K562 (cell line): ENCODE measurements at regions of chr10 and their contacts with region 1.

Region 1: DNA sequence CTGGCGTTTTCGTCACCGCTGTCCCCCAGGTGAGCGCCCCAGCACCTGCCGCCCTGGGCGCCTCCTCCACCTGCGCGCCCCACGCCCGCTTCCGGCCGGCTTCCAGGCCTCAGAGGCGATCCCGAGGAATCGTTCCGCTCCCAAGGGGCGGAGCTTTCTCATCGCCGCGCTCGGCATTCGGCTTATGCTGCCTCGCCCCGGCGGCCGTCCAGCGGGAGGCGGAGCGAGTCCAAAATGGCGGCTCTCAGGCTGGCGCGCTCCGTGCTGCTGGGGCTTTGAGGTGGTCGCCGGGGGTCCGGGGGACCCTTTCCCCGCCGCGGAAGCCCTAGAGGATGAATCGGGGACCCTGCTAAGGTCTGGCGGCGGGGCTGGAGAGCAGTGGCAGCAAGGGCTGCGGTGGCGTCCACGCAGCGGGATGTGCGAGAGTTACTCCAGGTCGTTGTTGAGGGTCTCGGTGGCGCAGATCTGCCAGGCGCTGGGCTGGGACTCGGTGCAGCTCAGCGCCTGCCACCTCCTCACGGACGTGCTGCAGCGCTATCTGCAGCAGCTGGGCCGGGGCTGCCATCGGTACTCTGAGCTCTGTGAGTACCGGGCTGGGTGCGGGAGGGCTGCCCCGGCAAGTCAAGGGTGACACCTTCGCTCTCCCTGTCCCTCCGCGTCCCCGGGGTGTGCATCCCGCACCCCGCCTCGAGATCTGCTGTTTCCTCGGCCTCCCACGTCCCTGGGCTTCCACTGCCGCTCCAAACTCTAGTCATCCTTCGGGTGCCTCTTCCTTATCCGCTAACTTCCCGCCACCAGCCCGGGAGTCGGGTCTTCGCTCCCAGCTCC is at the start of gene TAF3:
- DNase-seq: peak; percentile 90 to 97 (median 90)
- ATAC-seq: peak; percentile 84
- H3K4me3 ChIP-seq: peak within 1 kb of the TSS; percentile 88
- H3K27ac ChIP-seq: peak within 1 kb of the TSS; percentile 77
- H3K4me1 ChIP-seq: peaks cover 7 to 13% of the 10 kb centered on the region in 2 experiments
- H3K27me3 ChIP-seq: no peaks in the 10 kb centered on the region
- CTCF ChIP-seq: no peak
- EP300 ChIP-seq: peak; percentile 34; the same call in 1 of the 2 replicates
- POLR2A ChIP-seq: peak; percentile 93
- RAD21 ChIP-seq: no peak
- polyA plus RNA-seq, gene TAF3: 1.5 to 2.0 TPM

Region 2: GRCh38 chr10:7787857-7788638 is 30.5 kb before region 1 on chr10 and contains the starts of genes ATP5F1C and KIN:
- CTCF ChIA-PET with region 1: no interaction called
- POLR2A ChIA-PET with region 1: interaction called, 12 read pairs
- in situ Hi-C with region 1: no loop called
- intact Hi-C with region 1: loop called (anchors 2 kb)
- DNase-seq: peak; percentile 98
- ATAC-seq: peak; percentile 95
- H3K4me3 ChIP-seq: peak within 1 kb of the TSS; percentile 92
- H3K27ac ChIP-seq: peak within 1 kb of the TSS; percentile 87
- H3K4me1 ChIP-seq: peaks cover 4 to 12% of the 10 kb centered on the region in 2 experiments; a peak in 4 of 5 replicates
- H3K27me3 ChIP-seq: no peaks in the 10 kb centered on the region
- CTCF ChIP-seq: peak in 1 of 3 experiments; percentile 16; a peak in 1 of 6 replicates
- EP300 ChIP-seq: no peak
- POLR2A ChIP-seq: peak; percentile 96
- RAD21 ChIP-seq: no peak
- polyA plus RNA-seq, gene ATP5F1C: 1,372 to 1,475 TPM
- polyA plus RNA-seq, gene KIN: 30.7 to 35.6 TPM

Region 3: DNA sequence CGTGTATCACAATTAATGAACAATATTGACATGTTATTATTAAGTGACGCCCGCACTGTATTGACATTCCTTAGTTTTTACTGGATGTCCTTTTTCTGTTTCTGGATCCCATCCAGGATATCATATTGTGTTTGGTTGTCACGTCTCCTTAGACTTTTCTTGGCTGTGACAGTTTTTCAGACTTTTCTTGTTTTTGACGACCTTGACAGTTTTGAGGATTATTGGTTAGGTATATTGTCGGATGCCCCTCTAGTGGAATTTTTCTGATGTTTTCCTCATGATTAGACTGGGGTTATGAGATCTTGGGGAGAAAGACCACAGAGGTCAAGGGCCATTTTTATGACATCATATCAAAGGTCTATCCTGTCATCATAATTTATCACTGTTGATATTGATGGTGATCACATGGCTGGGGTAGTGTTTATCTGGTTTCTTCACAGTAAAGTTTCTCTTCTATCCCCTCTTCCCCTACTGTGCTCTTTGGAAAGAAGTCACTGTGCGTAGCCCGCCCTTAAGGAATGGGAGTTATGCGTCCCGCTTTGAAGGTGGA is 10.9 kb after region 1 on chr10:
- CTCF ChIA-PET with region 1: no interaction called
- POLR2A ChIA-PET with region 1: interaction called, 11 read pairs
- in situ Hi-C with region 1: no loop called
- intact Hi-C with region 1: no loop called
- DNase-seq: no peak
- ATAC-seq: no peak
- H3K4me3 ChIP-seq: no peak overlapping the region
- H3K27ac ChIP-seq: no peak overlapping the region
- H3K4me1 ChIP-seq: peaks cover 0 to 3% of the 10 kb centered on the region in 2 experiments; a peak in 2 of 5 replicates
- H3K27me3 ChIP-seq: no peaks in the 10 kb centered on the region
- CTCF ChIP-seq: no peak
- EP300 ChIP-seq: no peak
- POLR2A ChIP-seq: no peak
- RAD21 ChIP-seq: no peak